Activated CD4-positive, alpha-beta memory T cell treated with anti-CD3 and anti-CD28 coated beads, Interleukin-2, amount 10 ng/mL, durations not matched to agents 7 days and 5 days (primary cell): ENCODE measurements at regions of chr1 and their contacts with region 1.

Region 1: GRCh38 chr1:165697881-165698760 is at the start of gene ALDH9A1:
- DNase-seq: peak; percentile 91
- H3K4me3 Mint-ChIP-seq: peak within 1 kb of the TSS; percentile 97
- H3K27ac Mint-ChIP-seq: peak within 1 kb of the TSS; percentile 98
- H3K4me1 Mint-ChIP-seq: peaks cover 35% of the 10 kb centered on the region
- H3K27me3 Mint-ChIP-seq: peaks cover 1% of the 10 kb centered on the region
- total RNA-seq, gene ALDH9A1: 46.9 to 54.4 TPM

Region 2: DNA sequence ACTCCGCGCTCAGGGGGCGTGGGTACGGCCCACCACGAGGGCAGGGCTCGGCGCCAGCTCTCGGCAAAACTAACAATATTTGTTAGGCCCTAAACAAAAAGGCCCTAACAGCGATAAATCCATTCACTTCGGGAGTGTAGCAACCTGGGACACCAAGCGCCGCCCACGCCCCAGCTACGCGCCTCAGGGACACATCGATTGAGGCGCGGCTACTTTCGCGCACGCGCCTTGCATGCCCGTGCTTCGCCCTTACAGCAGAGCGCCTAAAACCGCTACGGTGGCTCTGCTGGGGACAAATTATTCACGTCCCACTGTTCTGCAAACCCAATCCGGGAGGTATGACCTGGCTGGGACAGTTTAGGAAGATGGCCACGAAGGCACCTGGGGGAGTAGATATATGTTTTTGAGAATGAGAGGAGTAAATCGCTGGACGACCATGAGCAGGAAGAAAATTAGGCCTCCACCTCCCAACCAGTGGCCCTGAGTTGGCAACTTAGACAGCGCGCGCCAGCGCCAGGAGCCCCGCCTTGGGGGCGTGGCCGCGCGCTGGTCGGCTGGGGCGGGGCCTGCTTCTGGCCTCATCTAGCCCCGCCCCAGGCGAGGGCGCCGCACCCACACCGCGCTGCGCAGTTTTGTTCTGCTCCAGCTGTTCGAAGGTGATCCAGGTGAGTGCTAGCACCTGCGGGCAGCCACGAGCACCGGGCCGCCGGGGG is 67.3 kb before region 1 on chr1 and contains the start of gene MGST3:
- CTCF ChIA-PET with region 1: interaction called, 7 read pairs
- POLR2A ChIA-PET with region 1: interaction called, 12 read pairs
- DNase-seq: peak; percentile 93
- H3K4me3 Mint-ChIP-seq: no peak within 1 kb of the TSS
- H3K27ac Mint-ChIP-seq: peak within 1 kb of the TSS; percentile 56
- H3K4me1 Mint-ChIP-seq: peaks cover 16% of the 10 kb centered on the region
- H3K27me3 Mint-ChIP-seq: peaks cover 10% of the 10 kb centered on the region
- total RNA-seq, gene MGST3: 63.4 to 70.3 TPM

Region 3: GRCh38 chr1:165686121-165686970 is 11.8 kb before region 1 on chr1:
- CTCF ChIA-PET with region 1: interaction called, 17 read pairs
- POLR2A ChIA-PET with region 1: interaction called, 36 read pairs
- DNase-seq: no peak
- H3K4me3 Mint-ChIP-seq: peak overlapping the region; percentile 23
- H3K27ac Mint-ChIP-seq: peak overlapping the region; percentile 72
- H3K4me1 Mint-ChIP-seq: peaks cover 40% of the 10 kb centered on the region
- H3K27me3 Mint-ChIP-seq: no peaks in the 10 kb centered on the region

Region 4: DNA sequence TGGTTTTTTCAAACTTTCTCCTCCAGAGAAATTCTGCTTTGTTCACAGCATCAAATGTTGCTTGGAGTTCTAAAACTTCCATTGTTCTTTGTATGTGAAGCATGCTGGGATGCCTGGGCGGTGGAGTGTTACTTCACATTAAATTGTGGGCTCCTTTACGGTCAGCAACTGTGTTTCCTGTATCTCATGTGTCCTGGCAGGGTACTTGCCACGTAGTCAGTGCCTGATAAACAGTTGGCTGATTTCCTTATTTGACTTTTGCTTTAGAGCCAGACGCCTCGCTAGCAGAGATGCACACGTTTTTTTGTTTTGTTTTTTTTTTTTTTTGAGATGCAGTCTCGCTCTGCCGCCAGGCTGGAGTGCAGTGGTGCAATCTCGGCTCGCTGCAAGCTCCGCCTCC is 226.0 kb after region 1 on chr1:
- CTCF ChIA-PET with region 1: interaction called, 10 read pairs
- POLR2A ChIA-PET with region 1: no interaction called
- DNase-seq: no peak
- H3K4me3 Mint-ChIP-seq: no peak overlapping the region
- H3K27ac Mint-ChIP-seq: no peak overlapping the region
- H3K4me1 Mint-ChIP-seq: peaks cover 11% of the 10 kb centered on the region
- H3K27me3 Mint-ChIP-seq: peaks cover 11% of the 10 kb centered on the region